Right ventricle myocardium superior (tissue), 1 donor: ENCODE measurements at regions of chrX and their contacts with region 1.

Region 1: GRCh38 chrX:25717122-25717521 is 421.0 kb upstream of the MAGEB18 start:
- DNase-seq: no peak
- ATAC-seq: no peak

Region 2: GRCh38 chrX:25156323-25156722 is 560.8 kb before region 1 on chrX:
- intact Hi-C with region 1: no loop called
- DNase-seq: no peak
- ATAC-seq: no peak

Region 3: GRCh38 chrX:25968920-25969319 is 251.8 kb after region 1 on chrX:
- intact Hi-C with region 1: loop called (anchors 10 kb)
- DNase-seq: no peak
- ATAC-seq: no peak

Region 4: DNA sequence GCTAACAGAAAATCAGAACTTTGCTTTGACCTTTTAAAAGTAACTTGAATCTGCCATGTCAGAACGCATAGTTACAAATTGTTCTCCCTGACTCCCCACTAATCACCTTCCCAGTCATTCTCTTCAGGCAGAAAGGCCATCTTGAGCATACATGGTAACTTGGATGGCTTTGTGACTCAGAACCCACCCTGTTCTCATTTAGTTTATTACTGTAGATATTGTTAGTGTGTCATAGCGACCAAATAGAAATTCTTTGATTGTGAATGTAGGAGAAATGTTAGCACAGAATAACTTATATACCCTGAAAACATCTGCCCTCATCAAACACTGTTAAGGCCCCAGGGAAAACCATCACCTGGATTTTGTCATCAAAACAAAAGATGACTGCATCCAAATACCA is 880.9 kb after region 1 on chrX:
- intact Hi-C with region 1: no loop called
- DNase-seq: no peak
- ATAC-seq: no peak